GM23248 (cell line): ENCODE measurements at regions of chr3 and their contacts with region 1.

Region 1: GRCh38 chr3:111717601-111718000 is 122.5 kb upstream of the ZBED2 start:
- DNase-seq: peak; percentile 87
- H3K4me3 ChIP-seq: no peak overlapping the region
- H3K27ac ChIP-seq: no peak overlapping the region
- H3K4me1 ChIP-seq: peaks cover 8% of the 10 kb centered on the region; the same call in 1 of the 2 replicates
- H3K27me3 ChIP-seq: no peaks in the 10 kb centered on the region

Region 2: DNA sequence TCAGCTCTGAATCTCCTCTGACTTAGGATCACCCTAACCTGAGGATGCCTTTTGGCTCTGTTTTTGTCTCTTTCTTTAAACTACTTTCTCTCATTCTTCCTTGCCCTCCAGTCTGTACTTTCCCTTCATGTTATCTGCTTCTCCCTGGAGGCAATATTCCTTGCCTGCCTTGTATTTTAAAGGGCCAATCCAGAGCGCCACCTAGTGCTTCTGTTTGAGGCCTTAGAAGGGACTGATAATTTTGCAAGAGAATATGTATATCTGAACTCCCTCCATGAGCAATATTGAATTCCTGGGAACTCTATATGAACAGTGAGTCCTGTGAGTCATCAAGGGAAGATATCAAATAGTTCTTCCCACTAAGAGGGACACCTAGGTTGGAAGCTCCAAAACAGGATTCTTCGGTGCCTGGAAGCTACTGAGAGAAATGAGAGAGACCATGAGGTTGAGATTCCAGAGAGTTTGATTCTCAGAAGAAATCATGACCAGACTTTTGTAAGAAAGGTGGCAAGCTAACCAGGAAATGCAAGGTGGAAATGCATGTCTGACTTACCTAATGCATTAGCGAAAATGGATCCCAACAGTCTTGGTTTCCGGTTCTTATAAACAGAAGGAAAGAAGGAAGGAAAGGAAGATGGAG is 379.4 kb before region 1 on chr3:
- in situ Hi-C with region 1: no loop called
- DNase-seq: peak; percentile 78
- H3K4me3 ChIP-seq: no peak overlapping the region
- H3K27ac ChIP-seq: no peak overlapping the region
- H3K4me1 ChIP-seq: peaks cover 24% of the 10 kb centered on the region
- H3K27me3 ChIP-seq: no peaks in the 10 kb centered on the region

Region 3: GRCh38 chr3:111859974-111860859 is 142.6 kb after region 1 on chr3:
- in situ Hi-C with region 1: loop called (anchors 5 kb)
- DNase-seq: peak; percentile 93
- H3K4me3 ChIP-seq: peak overlapping the region; percentile 81
- H3K27ac ChIP-seq: peak overlapping the region; percentile 95
- H3K4me1 ChIP-seq: peaks cover 42% of the 10 kb centered on the region
- H3K27me3 ChIP-seq: no peaks in the 10 kb centered on the region

Region 4: GRCh38 chr3:111963424-111963823 is 245.8 kb after region 1 on chr3:
- in situ Hi-C with region 1: loop called (anchors 5 kb)
- DNase-seq: peak; percentile 91
- H3K4me3 ChIP-seq: no peak overlapping the region
- H3K27ac ChIP-seq: peak overlapping the region; percentile 74
- H3K4me1 ChIP-seq: peaks cover 33% of the 10 kb centered on the region
- H3K27me3 ChIP-seq: no peaks in the 10 kb centered on the region

Region 5: DNA sequence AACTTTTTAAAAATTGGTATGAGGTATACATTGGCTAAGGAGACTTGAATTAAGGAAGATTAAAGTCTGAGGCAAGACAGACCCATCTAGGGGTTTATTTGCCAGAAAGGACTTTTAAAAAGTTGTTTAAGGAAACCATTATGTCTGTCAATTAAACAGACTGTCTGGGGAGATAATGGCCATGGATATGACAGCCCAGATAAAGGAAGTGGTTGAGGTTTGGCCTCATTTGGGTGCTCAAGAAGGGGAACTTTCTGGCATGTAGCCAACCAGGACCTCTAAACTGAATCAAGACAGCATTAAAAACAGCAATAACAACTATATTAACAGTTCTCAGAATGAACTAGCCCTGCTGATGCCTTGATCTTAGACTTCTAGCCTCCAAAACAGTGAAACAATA is 1138.9 kb after region 1 on chr3:
- in situ Hi-C with region 1: no loop called
- DNase-seq: no peak
- H3K4me3 ChIP-seq: no peak overlapping the region
- H3K27ac ChIP-seq: no peak overlapping the region
- H3K4me1 ChIP-seq: no peaks in the 10 kb centered on the region
- H3K27me3 ChIP-seq: no peaks in the 10 kb centered on the region